ENCODE measurements at regions of chr5 and their contacts with region 1.

Region 1: DNA sequence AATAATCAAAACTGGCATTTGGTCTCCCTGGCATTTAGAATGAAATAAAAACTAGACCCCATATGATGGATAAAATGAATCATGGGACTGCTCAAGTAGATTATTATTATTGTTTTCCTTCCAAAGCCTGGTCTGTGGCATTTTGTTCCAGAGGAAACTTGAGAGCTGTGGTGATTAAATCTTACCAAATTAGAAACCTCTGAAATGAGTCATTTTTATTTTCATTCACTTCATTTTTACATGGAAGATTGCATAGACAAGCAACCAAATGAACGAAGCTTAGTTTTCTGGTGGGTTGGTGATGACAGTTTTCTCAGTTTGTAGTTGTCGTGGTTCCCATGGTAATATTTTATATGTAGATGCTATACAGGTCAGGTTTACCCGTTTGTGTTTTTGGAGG is 23.4 kb downstream of the PAM start:
- DNase-seq: no peak
- H3K4me3 Mint-ChIP-seq: no peak overlapping the region
- H3K27ac Mint-ChIP-seq: peak overlapping the region; percentile 39
- H3K4me1 Mint-ChIP-seq: peaks cover 64% of the 10 kb centered on the region
- H3K27me3 Mint-ChIP-seq: no peaks in the 10 kb centered on the region

Region 2: GRCh38 chr5:102681407-102681983 is 97.0 kb before region 1 on chr5:
- CTCF ChIA-PET with region 1: interaction called, 11 read pairs
- POLR2A ChIA-PET with region 1: no interaction called
- intact Hi-C with region 1: loop called (anchors 5 kb)
- DNase-seq: peak; percentile 76
- H3K4me3 Mint-ChIP-seq: no peak overlapping the region
- H3K27ac Mint-ChIP-seq: no peak overlapping the region
- H3K4me1 Mint-ChIP-seq: no peaks in the 10 kb centered on the region
- H3K27me3 Mint-ChIP-seq: no peaks in the 10 kb centered on the region

Region 3: DNA sequence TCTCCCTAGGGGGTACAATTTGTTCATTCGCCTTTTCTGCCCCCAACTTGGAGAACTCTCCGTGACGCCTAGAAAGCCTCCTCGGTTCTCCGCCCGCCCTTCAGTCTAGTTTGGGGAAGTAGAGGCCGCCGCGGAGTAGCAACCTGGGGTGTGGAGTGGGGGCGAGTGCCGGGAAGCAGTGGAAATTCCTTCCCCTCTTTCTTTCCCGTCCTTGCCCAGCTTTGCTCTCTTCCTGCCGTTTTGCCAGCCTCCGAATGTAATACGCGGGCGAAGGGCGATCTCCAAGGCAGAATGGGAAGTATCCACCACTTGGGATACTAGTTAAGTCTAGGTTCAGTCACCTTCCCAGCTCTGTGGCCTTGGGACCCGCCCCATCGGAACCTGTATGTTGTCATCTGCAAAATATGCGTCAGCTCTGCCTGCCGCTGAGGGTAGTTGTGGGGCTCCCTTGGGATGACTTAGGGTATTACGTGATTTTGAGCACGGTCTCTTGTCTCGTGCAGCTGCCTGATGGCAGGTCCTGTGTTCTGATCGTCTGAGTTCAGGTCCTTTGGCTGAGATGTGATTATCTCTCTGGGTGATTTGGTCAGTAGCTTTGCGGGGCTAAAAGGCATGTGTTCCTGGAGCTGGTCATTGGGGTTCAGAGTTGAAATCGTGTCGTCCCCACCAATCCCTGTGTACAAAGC is 22.6 kb before region 1 on chr5:
- CTCF ChIA-PET with region 1: interaction called, 24 read pairs
- POLR2A ChIA-PET with region 1: interaction called, 19 read pairs
- intact Hi-C with region 1: loop called (anchors 1 kb)
- DNase-seq: peak; percentile 87
- H3K4me3 Mint-ChIP-seq: peak overlapping the region; percentile 91
- H3K27ac Mint-ChIP-seq: peak overlapping the region; percentile 93
- H3K4me1 Mint-ChIP-seq: peaks cover 40% of the 10 kb centered on the region
- H3K27me3 Mint-ChIP-seq: peaks cover 7% of the 10 kb centered on the region

Region 4: GRCh38 chr5:102767862-102768261 is 10.6 kb before region 1 on chr5:
- CTCF ChIA-PET with region 1: interaction called, 19 read pairs
- POLR2A ChIA-PET with region 1: interaction called, 5 read pairs
- intact Hi-C with region 1: loop called (anchors 1 kb)
- DNase-seq: peak; percentile 44
- H3K4me3 Mint-ChIP-seq: no peak overlapping the region
- H3K27ac Mint-ChIP-seq: peak overlapping the region; percentile 44
- H3K4me1 Mint-ChIP-seq: peaks cover 59% of the 10 kb centered on the region
- H3K27me3 Mint-ChIP-seq: no peaks in the 10 kb centered on the region

Region 5: GRCh38 chr5:102801371-102801770 is 22.9 kb after region 1 on chr5:
- CTCF ChIA-PET with region 1: interaction called, 18 read pairs
- POLR2A ChIA-PET with region 1: no interaction called
- intact Hi-C with region 1: no loop called
- DNase-seq: no peak
- H3K4me3 Mint-ChIP-seq: no peak overlapping the region
- H3K27ac Mint-ChIP-seq: no peak overlapping the region
- H3K4me1 Mint-ChIP-seq: peaks cover 33% of the 10 kb centered on the region
- H3K27me3 Mint-ChIP-seq: no peaks in the 10 kb centered on the region

Region 6: DNA sequence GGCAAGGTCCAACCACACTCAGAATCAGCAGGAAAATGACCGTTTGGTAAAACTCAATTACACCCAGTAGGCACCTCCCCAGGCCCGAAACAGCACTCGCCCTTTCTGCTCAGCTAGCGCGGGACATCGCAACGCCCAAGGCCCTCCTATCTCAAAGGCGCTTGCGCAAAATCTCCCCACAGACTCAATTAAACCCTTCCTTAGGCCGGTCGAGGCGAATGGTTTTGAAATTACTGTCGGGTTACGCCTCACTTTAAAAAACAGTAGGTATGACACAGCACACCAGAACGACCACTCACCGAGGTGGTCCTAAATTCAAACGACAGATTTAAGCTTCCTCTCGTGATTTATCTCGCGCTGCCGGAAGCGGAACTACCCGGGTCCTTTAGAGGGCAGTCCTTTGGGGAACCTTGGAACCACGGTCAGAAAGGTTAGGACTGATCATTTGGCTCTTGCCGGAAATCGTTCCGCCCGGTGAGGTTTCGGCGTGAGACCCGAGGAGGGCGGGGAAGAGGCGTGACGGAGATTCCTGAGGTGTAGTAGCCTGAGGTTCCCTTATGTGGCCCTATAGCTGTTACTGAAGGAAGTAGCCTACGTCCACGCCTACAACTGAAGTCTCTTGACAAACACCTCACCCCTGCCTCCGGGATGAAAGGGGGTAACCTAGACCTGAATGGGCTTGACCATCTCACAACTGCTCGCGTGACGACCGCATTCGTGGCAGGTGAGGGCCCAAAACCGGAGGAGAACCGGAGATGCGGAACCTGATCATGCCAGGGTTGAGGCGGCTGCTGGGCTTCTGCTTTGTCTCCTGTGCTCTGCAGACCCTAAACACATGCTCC is 341.5 kb after region 1 on chr5 and contains the starts of genes GIN1 and PPIP5K2:
- CTCF ChIA-PET with region 1: interaction called, 9 read pairs
- POLR2A ChIA-PET with region 1: interaction called, 3 read pairs
- intact Hi-C with region 1: loop called (anchors 1 kb)
- DNase-seq: peak; percentile 99
- H3K4me3 Mint-ChIP-seq: peak within 1 kb of the TSS; percentile 88
- H3K27ac Mint-ChIP-seq: peak within 1 kb of the TSS; percentile 99
- H3K4me1 Mint-ChIP-seq: peaks cover 40% of the 10 kb centered on the region
- H3K27me3 Mint-ChIP-seq: no peaks in the 10 kb centered on the region
- total RNA-seq, gene GIN1: 9.7 to 10.7 TPM
- total RNA-seq, gene PPIP5K2: 40.6 to 44.4 TPM

Region 7: DNA sequence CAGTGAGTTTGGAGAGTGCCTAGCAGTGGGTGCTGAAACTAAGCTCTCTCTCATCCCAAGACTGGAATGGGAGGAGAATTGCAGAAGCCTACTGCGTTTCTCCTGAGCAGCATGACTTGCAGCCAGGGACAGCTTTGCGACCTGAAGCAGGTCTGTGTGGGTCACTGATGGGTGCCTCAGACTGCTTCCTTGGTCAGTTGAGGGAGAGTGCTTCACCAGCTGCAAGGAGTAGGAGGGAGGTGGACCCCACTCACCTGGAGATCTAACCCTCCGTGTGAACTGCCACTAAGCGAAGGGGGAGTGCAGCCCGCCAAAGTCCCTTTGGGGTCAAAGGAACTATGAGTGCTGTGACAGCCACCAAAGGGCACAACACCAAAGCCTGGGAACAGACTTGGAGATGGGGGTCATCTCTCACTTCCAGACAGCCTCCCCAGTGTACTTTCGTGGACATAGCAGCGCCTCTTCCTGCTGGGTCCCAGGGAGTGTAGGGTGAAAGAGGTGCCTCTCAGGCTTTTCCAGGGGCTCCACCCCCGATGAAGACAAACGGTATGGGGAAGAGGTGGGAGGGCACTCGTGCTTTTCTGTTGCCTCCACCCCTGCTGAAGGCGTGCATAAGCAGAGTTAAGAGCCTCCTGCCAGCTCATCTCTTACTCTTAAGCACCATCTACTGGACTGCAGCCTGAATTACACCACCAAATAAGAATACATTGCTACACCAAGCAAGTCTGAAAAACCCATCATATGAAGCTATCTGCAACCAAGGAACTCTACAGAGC is 445.8 kb after region 1 on chr5:
- CTCF ChIA-PET with region 1: no interaction called
- POLR2A ChIA-PET with region 1: no interaction called
- intact Hi-C with region 1: loop called (anchors 10 kb)
- DNase-seq: peak; percentile 34
- H3K4me3 Mint-ChIP-seq: no peak overlapping the region
- H3K27ac Mint-ChIP-seq: no peak overlapping the region
- H3K4me1 Mint-ChIP-seq: no peaks in the 10 kb centered on the region
- H3K27me3 Mint-ChIP-seq: peaks cover 23% of the 10 kb centered on the region

Measured in activated CD4-positive, alpha-beta memory T cell treated with anti-CD3 and anti-CD28 coated beads for 36 hours (primary cell).